Activated T-helper 1 cell treated with anti-CD3 and anti-CD28 coated beads, Interleukin-12 subunit alpha, Interleukin-12 subunit beta, Interleukin-2, Interleukin-4 antibody, amounts not matched to agents 30 ng/mL and 10 ng/mL and 1 ng/mL, durations not matched to agents 14 hours and 24 hours and 36 hours (primary cell): ENCODE measurements at regions of chr6 and their contacts with region 1.

Region 1: DNA sequence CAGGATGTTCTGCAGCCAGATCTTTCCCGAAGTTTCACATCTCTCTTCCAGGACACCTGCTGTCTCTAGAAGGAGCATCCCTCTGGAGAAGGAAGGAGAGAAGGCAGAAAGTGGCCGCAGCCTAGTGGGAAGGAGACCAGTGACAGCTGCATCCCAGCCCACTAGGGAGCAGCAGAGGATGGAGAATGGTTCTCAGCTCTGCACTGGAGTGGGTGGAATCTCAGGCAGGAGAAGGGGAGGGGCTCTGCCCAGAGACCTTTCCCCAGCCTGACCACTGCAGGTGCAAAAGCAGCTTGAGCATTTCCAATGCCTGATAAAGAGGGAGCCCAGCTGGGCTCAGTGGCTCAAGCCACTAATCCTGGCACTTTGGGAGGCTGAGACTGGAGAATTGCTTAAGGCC is 32.3 kb downstream of the NCR2 start:
- DNase-seq: no peak
- H3K4me3 Mint-ChIP-seq: no peak overlapping the region
- H3K27ac Mint-ChIP-seq: no peak overlapping the region
- H3K4me1 Mint-ChIP-seq: peaks cover 22% of the 10 kb centered on the region
- H3K27me3 Mint-ChIP-seq: peaks cover 68% of the 10 kb centered on the region

Region 2: DNA sequence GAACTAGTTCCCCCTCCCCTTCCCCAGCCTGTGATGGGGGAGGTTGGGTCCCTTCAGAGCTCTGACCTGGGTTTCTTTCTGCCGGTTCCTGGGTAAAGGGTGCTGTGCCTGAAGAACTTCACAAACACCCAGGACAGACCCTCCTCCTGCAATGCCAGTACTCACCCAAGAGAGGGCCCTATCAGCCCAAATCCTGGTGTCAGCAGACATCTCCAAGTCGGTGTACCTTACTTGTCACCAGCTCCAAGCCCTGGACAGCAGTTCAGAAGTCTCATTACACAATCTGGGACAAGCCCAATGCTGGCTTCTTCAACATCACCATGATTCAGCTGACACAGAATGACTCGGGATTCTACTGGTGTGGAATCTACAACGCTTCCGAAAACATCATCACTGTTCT is 139.1 kb before region 1 on chr6:
- intact Hi-C with region 1: no loop called
- DNase-seq: no peak
- H3K4me3 Mint-ChIP-seq: no peak overlapping the region
- H3K27ac Mint-ChIP-seq: no peak overlapping the region
- H3K4me1 Mint-ChIP-seq: no peaks in the 10 kb centered on the region
- H3K27me3 Mint-ChIP-seq: peaks cover 19% of the 10 kb centered on the region

Region 3: GRCh38 chr6:41306187-41306854 is 61.4 kb before region 1 on chr6:
- intact Hi-C with region 1: loop called (anchors 1 kb)
- DNase-seq: peak; percentile 25
- H3K4me3 Mint-ChIP-seq: no peak overlapping the region
- H3K27ac Mint-ChIP-seq: no peak overlapping the region
- H3K4me1 Mint-ChIP-seq: peaks cover 15% of the 10 kb centered on the region
- H3K27me3 Mint-ChIP-seq: peaks cover 17% of the 10 kb centered on the region

Region 4: DNA sequence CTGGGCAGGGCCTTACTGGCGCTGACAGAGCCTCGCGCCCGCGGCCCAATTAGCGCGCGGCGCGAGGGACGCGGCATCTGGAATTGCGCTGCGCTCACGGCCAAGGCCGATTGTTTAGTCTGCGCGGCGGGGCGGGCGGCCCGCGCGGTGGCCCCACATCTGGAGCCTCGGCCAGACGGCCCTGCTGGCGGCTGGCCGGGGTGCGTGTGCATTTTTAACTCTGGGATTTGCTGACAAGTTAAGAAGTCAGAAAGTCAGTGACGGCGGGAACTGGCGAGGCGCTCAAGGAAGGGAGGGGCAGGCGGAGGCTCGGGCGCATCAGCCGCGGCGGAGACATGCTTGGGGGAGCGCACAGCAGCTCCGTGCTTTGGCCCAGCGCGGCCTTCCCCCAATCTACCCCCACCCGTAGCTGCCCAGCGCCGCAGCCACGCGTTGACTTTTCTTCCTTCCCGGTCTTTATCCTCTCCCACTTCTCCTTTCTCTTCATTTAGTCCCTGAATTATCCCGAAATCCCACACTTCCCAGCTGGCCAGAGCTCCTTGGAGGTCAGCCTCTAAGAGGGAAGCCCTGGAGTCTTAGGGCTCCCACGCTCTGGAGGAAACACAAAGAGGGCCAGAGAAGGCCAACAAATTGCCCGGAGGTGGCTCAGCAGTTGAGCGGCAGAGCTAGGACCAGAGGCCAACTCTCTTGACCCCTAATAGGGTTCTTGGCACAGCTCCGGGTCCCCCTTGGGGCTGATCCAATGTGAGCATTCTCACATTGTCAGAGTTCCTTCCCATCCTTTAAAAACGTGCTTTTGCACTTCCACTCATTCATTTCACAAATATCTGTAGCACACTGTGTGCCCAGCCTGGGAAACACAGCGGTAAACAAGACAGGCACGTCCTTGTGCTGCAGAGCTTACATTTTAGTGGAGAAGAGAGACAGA is 137.7 kb after region 1 on chr6:
- intact Hi-C with region 1: loop called (anchors 2 kb)
- DNase-seq: no peak
- H3K4me3 Mint-ChIP-seq: peak overlapping the region; percentile 52
- H3K27ac Mint-ChIP-seq: no peak overlapping the region
- H3K4me1 Mint-ChIP-seq: peaks cover 6% of the 10 kb centered on the region
- H3K27me3 Mint-ChIP-seq: peaks cover 72% of the 10 kb centered on the region

Region 5: DNA sequence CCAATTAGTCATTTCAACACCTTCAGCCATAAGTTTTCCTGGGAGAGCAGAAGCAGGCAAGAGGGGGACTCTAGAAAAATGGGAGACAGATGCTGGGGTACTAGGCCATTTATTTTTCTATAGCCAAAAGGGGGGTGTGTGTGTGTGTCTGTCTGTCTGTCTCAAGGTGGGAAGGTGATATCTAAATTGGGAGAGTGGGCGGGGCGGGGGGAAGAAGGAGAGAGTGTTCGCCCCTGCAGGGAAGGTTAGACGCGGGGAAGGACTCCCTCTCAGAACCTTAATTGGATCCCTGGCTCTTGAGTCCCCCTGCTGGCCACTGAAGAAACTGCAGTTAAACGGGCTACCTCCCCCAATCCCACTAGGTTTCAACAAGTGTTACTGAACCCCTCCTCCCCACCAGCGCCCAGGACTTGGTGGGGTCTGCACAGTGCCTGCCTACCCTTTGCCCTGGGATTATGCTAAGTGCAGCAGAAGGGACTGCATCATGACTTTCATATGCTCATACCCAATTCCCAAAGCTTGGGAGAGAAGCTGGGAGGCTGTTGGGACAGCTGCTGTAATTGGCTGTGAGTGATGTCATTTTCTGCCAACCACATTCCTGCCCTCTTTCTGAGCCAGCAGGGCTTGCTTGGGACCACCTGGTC is 224.3 kb after region 1 on chr6:
- intact Hi-C with region 1: loop called (anchors 1 kb)
- DNase-seq: peak; percentile 60
- H3K4me3 Mint-ChIP-seq: no peak overlapping the region
- H3K27ac Mint-ChIP-seq: no peak overlapping the region
- H3K4me1 Mint-ChIP-seq: no peaks in the 10 kb centered on the region
- H3K27me3 Mint-ChIP-seq: no peaks in the 10 kb centered on the region

Region 6: DNA sequence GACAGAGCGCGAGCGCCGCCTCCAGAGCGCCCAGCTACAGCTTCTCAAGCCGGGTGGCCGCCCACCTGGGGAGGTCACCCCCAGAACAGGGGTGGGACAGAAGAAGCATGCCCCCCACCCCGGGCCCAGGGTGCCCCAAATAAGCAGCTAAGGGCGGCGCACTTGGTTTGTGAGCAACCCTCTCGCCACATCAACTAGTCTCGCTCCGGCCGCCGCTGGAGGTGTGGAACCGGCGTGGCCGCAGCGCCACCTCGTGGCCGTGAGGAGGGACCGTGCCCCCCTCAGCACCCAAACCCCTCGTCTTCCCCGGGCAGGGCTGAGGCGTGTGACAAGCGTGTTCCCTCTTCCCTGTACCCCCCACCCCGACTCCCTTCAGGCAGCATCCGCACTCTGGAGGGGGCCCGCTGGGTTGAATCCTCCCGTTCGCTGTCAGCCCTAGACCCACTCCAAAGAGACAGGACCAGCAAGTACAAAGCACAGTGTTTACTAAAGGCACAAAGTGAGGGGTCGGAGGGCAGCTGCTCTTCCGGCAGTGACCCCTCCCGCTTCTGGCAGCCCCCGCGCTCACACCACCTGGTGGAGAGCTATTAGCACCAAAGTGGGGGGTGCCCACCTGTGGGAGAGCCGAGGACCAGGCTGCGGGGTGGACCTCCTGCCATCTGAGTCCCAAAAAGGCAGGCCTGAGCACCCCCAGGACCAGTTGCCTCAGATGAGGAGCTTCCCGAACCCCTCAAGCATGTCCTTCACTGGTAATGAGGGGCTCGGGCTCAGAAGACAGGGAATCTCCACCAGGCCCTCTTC is 316.0 kb after region 1 on chr6:
- intact Hi-C with region 1: loop called (anchors 1 kb)
- DNase-seq: peak; percentile 71
- H3K4me3 Mint-ChIP-seq: peak overlapping the region; percentile 75
- H3K27ac Mint-ChIP-seq: peak overlapping the region; percentile 73
- H3K4me1 Mint-ChIP-seq: peaks cover 6% of the 10 kb centered on the region
- H3K27me3 Mint-ChIP-seq: no peaks in the 10 kb centered on the region